ENCODE measurements at regions of chr22 and their contacts with region 1.

Region 1: GRCh38 chr22:39545386-39546365 is 13.1 kb upstream of the RPS19BP1 start:
- DNase-seq: no peak

Region 2: DNA sequence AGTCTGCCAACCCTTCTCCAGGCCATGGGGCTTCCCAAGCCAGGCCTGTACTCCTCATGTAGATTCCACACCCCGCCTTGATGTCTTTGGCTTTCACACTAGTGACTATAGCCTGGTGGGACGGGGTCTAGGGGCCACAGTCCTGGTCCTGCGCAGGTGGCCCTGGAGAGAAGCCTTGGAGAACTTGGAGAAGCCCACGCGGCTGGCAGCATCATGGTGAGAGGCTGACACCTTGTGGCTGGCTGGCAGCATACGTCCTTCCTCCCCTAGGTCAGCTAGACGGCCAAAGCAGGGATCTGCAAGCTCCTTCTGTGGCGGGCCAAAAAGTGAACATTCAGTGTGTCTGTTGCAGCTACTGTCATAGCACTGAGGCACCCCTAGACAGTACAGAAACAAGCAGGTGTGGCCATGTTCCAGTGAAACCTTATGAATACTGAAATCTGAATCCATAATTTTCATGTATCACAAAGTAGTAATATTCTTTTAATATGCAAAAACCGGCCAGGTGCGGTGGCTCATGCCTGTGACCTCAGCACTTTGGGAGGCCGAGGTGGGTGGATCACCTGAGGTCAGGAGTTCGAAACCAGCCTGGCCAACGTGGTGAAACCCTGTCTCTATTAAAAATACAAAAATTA is 491.0 kb after region 1 on chr22:
- intact Hi-C with region 1: loop called (anchors 5 kb)
- DNase-seq: no peak